ENCODE measurements at regions of chrX and their contacts with region 1.

Region 1: GRCh38 chrX:48574270-48575266 is at the start of gene RBM3:
- DNase-seq: peak; percentile 95
- ATAC-seq: peak; percentile 91
- H3K4me3 Mint-ChIP-seq: peak within 1 kb of the TSS; percentile 99
- H3K27ac Mint-ChIP-seq: peak within 1 kb of the TSS; percentile 100
- H3K4me1 Mint-ChIP-seq: peaks cover 25% of the 10 kb centered on the region
- H3K27me3 Mint-ChIP-seq: no peaks in the 10 kb centered on the region
- total RNA-seq, gene RBM3: 164 to 202 TPM

Region 2: GRCh38 chrX:48475774-48476577 is 98.6 kb before region 1 on chrX and contains the start of gene FTSJ1:
- CTCF ChIA-PET with region 1: no interaction called
- POLR2A ChIA-PET with region 1: no interaction called
- intact Hi-C with region 1: loop called (anchors 1 to 10 kb)
- DNase-seq: peak; percentile 88
- ATAC-seq: peak; percentile 91
- H3K4me3 Mint-ChIP-seq: peak within 1 kb of the TSS; percentile 93
- H3K27ac Mint-ChIP-seq: peak within 1 kb of the TSS; percentile 90
- H3K4me1 Mint-ChIP-seq: peaks cover 36% of the 10 kb centered on the region
- H3K27me3 Mint-ChIP-seq: no peaks in the 10 kb centered on the region
- total RNA-seq, gene FTSJ1: 73.0 to 93.7 TPM

Region 3: DNA sequence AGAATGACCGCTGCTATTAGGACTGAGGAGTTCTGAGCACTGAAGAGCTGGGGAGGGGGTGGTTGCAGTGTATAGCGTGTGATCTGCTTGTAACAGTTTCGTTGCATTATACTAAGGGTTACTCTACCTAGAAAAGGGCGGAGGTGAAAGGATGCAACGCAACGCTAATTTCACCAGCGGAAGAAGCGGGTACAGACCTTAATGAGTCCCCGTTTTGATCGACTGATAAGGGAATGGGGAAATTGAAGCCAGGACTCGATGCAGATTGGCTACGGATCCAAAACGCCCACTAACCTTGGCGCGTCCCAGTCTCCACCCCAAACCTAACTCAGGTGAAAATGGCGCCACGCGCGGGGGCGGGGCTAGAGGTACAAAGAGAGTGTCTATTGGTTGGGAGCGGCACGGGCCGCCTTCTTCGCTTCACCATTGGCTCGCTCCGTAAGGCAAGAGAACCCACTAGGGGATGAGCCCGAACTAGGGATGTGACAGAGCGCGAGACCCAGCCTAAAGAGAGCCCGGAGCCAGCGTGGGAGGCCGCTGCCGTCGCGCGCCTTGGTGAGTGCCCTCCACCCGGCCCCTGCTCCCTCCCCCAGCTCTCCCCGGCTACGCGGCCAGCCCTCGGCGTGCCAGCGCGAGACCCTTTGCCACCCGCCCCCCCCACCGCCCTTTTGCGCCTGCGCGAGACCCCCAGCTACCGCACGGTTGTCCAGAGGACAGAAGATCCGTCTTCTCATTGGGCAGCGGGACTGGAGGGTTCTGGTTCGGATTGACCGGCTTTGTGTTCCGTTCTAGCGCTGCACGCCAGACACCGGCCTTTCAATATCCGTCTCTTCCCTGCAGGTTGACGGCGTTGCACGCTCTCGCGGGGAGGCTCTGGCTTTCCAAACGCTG is 53.0 kb before region 1 on chrX and contains the start of gene EBP:
- CTCF ChIA-PET with region 1: no interaction called
- POLR2A ChIA-PET with region 1: no interaction called
- intact Hi-C with region 1: loop called (anchors 1 kb)
- DNase-seq: peak; percentile 97
- ATAC-seq: peak; percentile 94
- H3K4me3 Mint-ChIP-seq: peak within 1 kb of the TSS; percentile 89
- H3K27ac Mint-ChIP-seq: peak within 1 kb of the TSS; percentile 98
- H3K4me1 Mint-ChIP-seq: peaks cover 15% of the 10 kb centered on the region
- H3K27me3 Mint-ChIP-seq: no peaks in the 10 kb centered on the region
- total RNA-seq, gene EBP: 137 to 140 TPM

Region 4: GRCh38 chrX:48558271-48558670 is 16.3 kb before region 1 on chrX:
- CTCF ChIA-PET with region 1: interaction called, 3 read pairs
- POLR2A ChIA-PET with region 1: interaction called, 3 read pairs
- intact Hi-C with region 1: loop called in 1 of 2 experiments (anchors 1 kb)
- DNase-seq: no peak
- ATAC-seq: peak; percentile 99
- H3K4me3 Mint-ChIP-seq: no peak overlapping the region
- H3K27ac Mint-ChIP-seq: peak overlapping the region; percentile 82
- H3K4me1 Mint-ChIP-seq: peaks cover 3% of the 10 kb centered on the region
- H3K27me3 Mint-ChIP-seq: no peaks in the 10 kb centered on the region

Region 5: GRCh38 chrX:48917139-48918001 is 342.8 kb after region 1 on chrX:
- CTCF ChIA-PET with region 1: no interaction called
- POLR2A ChIA-PET with region 1: no interaction called
- intact Hi-C with region 1: loop called in 1 of 2 experiments (anchors 1 kb)
- DNase-seq: peak; percentile 92
- ATAC-seq: peak; percentile 34
- H3K4me3 Mint-ChIP-seq: peak overlapping the region; percentile 97
- H3K27ac Mint-ChIP-seq: peak overlapping the region; percentile 95
- H3K4me1 Mint-ChIP-seq: peaks cover 51% of the 10 kb centered on the region
- H3K27me3 Mint-ChIP-seq: no peaks in the 10 kb centered on the region

Region 6: DNA sequence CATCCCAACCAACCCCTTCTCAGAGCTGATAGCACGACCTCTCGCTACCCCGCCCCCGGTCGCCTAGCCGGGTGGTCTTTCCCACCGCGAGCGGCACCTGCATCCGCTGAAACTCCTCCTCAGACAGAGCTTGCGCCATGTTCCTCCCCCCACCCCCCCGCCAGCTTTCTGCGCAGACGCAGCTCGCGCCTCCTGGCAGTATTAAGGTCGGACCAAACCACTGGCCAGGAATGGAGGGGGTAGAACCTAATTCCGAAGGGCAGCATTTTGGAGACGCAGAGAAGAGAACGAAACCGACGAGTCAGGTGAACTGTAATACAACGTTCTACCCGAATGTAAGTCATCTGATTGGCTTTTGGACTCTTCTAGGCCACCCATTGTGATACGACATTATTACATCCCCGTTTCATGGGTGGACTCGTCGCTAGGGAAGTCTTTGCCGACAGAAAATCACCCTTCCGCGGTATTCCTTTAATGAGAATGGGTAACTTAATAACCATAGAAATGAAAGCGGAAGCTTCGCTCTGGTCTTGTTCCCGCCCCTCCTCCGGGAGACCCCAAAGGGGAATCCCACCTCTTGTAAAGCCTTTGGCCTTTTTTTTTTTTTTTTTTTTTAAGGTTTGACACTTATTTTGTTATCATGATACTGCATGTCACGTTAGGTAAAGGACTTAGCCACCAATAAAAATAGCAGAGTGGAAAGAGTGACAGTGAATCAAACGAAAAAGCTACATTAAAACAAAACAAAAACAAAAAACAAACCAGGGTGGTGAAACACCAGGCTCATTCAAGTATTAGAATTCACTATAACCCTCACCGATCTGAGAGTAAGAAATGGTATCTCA is 427.7 kb after region 1 on chrX and contains the start of gene GRIPAP1:
- CTCF ChIA-PET with region 1: no interaction called
- POLR2A ChIA-PET with region 1: no interaction called
- intact Hi-C with region 1: loop called in 1 of 2 experiments (anchors 1 kb)
- DNase-seq: peak; percentile 87
- ATAC-seq: peak; percentile 82
- H3K4me3 Mint-ChIP-seq: peak within 1 kb of the TSS; percentile 97
- H3K27ac Mint-ChIP-seq: peak within 1 kb of the TSS; percentile 98
- H3K4me1 Mint-ChIP-seq: peaks cover 34% of the 10 kb centered on the region
- H3K27me3 Mint-ChIP-seq: no peaks in the 10 kb centered on the region
- total RNA-seq, gene GRIPAP1: 57.8 to 63.3 TPM

Region 7: GRCh38 chrX:49172280-49172780 is 597.8 kb after region 1 on chrX:
- CTCF ChIA-PET with region 1: no interaction called
- POLR2A ChIA-PET with region 1: no interaction called
- intact Hi-C with region 1: loop called in 1 of 2 experiments (anchors 10 kb)
- DNase-seq: peak; percentile 85
- ATAC-seq: peak; percentile 78
- H3K4me3 Mint-ChIP-seq: peak overlapping the region; percentile 88
- H3K27ac Mint-ChIP-seq: peak overlapping the region; percentile 93
- H3K4me1 Mint-ChIP-seq: peaks cover 31% of the 10 kb centered on the region
- H3K27me3 Mint-ChIP-seq: no peaks in the 10 kb centered on the region

Measured in activated CD4-positive, alpha-beta T cell treated with anti-CD3 and anti-CD28 coated beads for 36 hours (primary cell).